CD8-positive, alpha-beta T cell (primary cell): ENCODE measurements at regions of chr17 and their contacts with region 1.

Region 1: GRCh38 chr17:45135192-45135977 is at the start of gene ACBD4:
- DNase-seq: peak; percentile 95 to 99 (median 98)
- ATAC-seq: peak; percentile 86
- H3K4me3 ChIP-seq: peak within 1 kb of the TSS; percentile 92 to 98
- H3K4me3 Mint-ChIP-seq: peak within 1 kb of the TSS; percentile 90
- H3K27ac ChIP-seq: peak within 1 kb of the TSS; percentile 62 to 78
- H3K27ac Mint-ChIP-seq: peak within 1 kb of the TSS; percentile 84
- H3K4me1 ChIP-seq: peaks cover 12% of the 10 kb centered on the region
- H3K4me1 Mint-ChIP-seq: peaks cover 28% of the 10 kb centered on the region
- H3K27me3 ChIP-seq: no peaks in the 10 kb centered on the region
- H3K27me3 Mint-ChIP-seq: peaks cover 2% of the 10 kb centered on the region
- CTCF ChIP-seq: peak; percentile 100
- total RNA-seq, gene ACBD4: 15.5 to 19.3 TPM

Region 2: GRCh38 chr17:45060797-45061605 is 74.4 kb before region 1 on chr17 and contains the start of gene NMT1:
- CTCF ChIA-PET with region 1: interaction called, 7 read pairs
- POLR2A ChIA-PET with region 1: no interaction called
- intact Hi-C with region 1: loop called in 1 of 2 experiments (anchors 1 kb)
- DNase-seq: peak; percentile 88 to 99 (median 94)
- ATAC-seq: peak; percentile 90
- H3K4me3 ChIP-seq: peak within 1 kb of the TSS; percentile 84 to 88
- H3K4me3 Mint-ChIP-seq: peak within 1 kb of the TSS; percentile 97
- H3K27ac ChIP-seq: peak within 1 kb of the TSS; percentile 81 to 91
- H3K27ac Mint-ChIP-seq: peak within 1 kb of the TSS; percentile 99
- H3K4me1 ChIP-seq: peaks cover 32% of the 10 kb centered on the region
- H3K4me1 Mint-ChIP-seq: peaks cover 43% of the 10 kb centered on the region
- H3K27me3 ChIP-seq: no peaks in the 10 kb centered on the region
- H3K27me3 Mint-ChIP-seq: no peaks in the 10 kb centered on the region
- CTCF ChIP-seq: no peak
- total RNA-seq, gene NMT1: 62.6 to 66.6 TPM

Region 3: DNA sequence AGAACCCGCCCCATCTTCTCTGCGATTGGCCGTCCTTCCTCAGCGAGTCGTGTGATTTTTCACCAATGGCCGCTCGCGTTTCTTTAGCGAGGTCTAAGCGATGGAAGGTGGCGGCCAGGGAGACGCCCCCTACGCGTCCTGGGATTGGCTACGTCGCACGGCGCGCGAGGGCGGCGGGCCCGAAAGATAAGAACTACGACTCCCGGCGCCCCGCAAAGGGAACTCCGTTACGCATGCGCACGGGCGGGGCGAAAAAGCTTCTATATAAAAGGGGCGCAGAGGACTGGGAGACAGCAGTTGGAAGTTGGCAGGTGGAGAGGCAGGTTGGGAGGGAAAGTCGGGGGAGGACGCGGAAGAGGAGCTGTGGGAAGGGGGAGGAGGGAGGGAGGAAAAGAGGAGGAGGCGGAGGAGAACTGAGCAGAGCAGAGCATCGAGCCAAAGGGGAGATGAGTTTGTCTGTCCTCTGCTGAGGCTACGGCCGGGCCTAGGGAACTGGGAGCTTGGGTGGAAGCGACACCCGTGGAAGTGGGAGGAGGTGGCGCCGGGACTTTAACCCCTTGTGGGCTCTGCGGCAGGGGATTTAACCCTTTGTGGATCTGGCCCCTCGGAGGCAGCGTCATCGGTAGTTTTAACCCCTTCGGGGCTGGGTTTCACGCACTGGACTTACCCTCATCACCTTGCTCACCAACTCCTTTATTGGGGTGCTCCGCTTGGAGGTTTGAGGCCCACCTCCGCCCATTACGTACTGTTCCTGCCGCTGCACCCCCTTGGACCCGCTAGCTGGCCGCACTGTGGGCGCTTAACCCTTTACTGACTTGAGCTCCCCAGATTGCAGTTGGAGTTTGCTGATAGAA is 13.0 kb after region 1 on chr17 and contains the start of gene HEXIM1:
- CTCF ChIA-PET with region 1: interaction called, 239 read pairs
- POLR2A ChIA-PET with region 1: interaction called, 119 read pairs
- intact Hi-C with region 1: loop called (anchors 1 kb)
- DNase-seq: peak; percentile 98 to 100 (median 99)
- ATAC-seq: peak; percentile 80
- H3K4me3 ChIP-seq: peak within 1 kb of the TSS; percentile 68 to 80
- H3K4me3 Mint-ChIP-seq: peak within 1 kb of the TSS; percentile 98
- H3K27ac ChIP-seq: peak within 1 kb of the TSS; percentile 84 to 94
- H3K27ac Mint-ChIP-seq: peak within 1 kb of the TSS; percentile 100
- H3K4me1 ChIP-seq: peaks cover 41% of the 10 kb centered on the region
- H3K4me1 Mint-ChIP-seq: peaks cover 54% of the 10 kb centered on the region
- H3K27me3 ChIP-seq: no peaks in the 10 kb centered on the region
- H3K27me3 Mint-ChIP-seq: no peaks in the 10 kb centered on the region
- CTCF ChIP-seq: no peak
- total RNA-seq, gene HEXIM1: 76.5 to 77.2 TPM

Region 4: DNA sequence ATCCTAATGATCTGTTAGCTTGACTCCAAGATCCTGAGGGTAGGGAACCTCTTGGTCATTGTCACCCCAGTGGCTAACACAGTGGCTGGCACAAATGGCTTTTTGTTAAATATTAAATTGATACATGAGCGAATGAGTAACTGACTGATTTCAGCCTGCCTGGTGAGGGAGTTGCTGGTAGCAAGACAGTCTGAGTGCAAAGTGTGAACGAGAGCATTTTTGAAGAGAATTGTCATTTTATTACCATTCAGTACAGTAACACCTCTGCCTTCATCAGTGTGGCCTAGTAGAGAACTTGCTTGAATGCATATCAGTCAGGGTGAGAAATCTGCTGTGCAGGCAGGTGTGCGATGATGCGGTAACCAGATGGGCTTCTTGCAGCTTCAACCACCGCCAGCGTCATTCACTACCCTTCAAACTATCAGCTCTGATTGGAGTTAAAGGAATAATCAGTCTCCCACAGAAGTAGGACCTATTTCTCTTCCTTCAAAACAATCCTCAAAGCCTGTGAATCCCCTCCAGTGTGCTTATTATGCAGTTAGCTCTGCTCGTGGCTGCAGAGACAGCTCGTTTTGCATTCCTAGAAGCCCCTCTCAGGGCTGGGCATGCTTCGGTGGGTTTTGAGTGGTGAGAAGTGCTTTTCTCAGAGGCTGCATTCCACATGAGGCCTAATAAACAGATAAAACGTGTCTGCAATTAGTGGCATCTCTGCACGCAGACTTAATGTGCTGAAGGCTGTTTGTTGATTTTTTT is 55.3 kb after region 1 on chr17:
- CTCF ChIA-PET with region 1: interaction called, 277 read pairs
- POLR2A ChIA-PET with region 1: interaction called, 4 read pairs
- intact Hi-C with region 1: no loop called
- DNase-seq: no peak
- ATAC-seq: no peak
- H3K4me3 ChIP-seq: no peak overlapping the region
- H3K4me3 Mint-ChIP-seq: no peak overlapping the region
- H3K27ac ChIP-seq: no peak overlapping the region
- H3K27ac Mint-ChIP-seq: no peak overlapping the region
- H3K4me1 ChIP-seq: no peaks in the 10 kb centered on the region
- H3K4me1 Mint-ChIP-seq: no peaks in the 10 kb centered on the region
- H3K27me3 ChIP-seq: no peaks in the 10 kb centered on the region
- H3K27me3 Mint-ChIP-seq: no peaks in the 10 kb centered on the region
- CTCF ChIP-seq: no peak

Region 5: DNA sequence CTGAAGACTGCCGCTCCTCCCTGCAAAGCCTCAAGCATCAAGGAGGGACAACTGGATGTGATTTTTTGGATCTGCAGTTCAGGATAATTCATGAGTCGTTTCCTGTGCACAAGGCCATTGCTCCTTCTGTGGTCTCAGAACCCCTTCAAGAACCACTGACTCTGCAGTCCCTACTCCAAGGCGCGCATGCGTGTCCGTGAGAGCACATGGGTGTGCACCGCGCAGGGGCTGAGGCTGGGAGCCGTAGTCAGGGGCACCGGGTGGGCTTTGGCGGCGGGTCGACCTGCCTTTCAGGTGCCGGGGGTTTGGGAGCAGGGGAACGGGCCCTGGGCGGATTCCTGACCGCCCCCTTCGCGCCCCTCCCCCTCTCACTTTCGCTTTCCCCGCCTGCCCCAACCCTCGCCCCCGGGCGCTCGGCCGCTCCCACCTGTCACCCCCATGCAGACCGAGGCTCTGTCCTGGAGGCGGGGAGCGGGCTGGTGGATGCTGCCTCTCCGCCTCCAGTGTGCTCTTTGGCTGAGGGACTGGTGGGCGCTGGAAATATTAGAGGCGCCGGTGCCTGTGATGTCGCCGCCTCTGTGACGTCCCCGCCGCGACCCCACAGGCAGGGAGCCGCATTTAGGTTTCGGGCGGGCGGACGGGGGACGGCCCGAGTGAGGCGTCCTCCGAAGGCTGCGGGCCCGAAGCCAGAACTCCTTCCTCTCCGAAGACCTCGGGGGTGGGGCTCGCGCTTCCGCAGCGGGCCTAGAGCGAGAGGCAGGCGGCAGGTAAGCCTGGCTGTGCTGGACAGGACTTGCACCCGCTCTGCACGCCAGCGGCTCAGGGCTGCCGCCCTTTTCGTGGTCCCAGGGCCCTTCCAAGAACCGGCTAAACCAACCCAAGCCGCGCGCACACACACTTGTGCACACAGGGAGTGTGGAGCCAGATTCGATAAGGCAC is 126.5 kb after region 1 on chr17 and contains the start of gene SPATA32:
- CTCF ChIA-PET with region 1: interaction called, 3 read pairs
- POLR2A ChIA-PET with region 1: no interaction called
- intact Hi-C with region 1: loop called in 1 of 2 experiments (anchors 2 kb)
- DNase-seq: peak; percentile 37 to 85 (median 75)
- ATAC-seq: peak; percentile 86
- H3K4me3 ChIP-seq: peak within 1 kb of the TSS; percentile 71 to 76
- H3K4me3 Mint-ChIP-seq: peak within 1 kb of the TSS; percentile 83
- H3K27ac ChIP-seq: peak within 1 kb of the TSS; percentile 29 to 74
- H3K27ac Mint-ChIP-seq: peak within 1 kb of the TSS; percentile 87
- H3K4me1 ChIP-seq: peaks cover 32% of the 10 kb centered on the region
- H3K4me1 Mint-ChIP-seq: peaks cover 29% of the 10 kb centered on the region
- H3K27me3 ChIP-seq: no peaks in the 10 kb centered on the region
- H3K27me3 Mint-ChIP-seq: no peaks in the 10 kb centered on the region
- CTCF ChIP-seq: no peak
- total RNA-seq, gene SPATA32: 0.22 TPM in 1 of 2 experiments, not detected in the other